ENCODE measurements at regions of chr19 and their contacts with region 1.

Region 1: DNA sequence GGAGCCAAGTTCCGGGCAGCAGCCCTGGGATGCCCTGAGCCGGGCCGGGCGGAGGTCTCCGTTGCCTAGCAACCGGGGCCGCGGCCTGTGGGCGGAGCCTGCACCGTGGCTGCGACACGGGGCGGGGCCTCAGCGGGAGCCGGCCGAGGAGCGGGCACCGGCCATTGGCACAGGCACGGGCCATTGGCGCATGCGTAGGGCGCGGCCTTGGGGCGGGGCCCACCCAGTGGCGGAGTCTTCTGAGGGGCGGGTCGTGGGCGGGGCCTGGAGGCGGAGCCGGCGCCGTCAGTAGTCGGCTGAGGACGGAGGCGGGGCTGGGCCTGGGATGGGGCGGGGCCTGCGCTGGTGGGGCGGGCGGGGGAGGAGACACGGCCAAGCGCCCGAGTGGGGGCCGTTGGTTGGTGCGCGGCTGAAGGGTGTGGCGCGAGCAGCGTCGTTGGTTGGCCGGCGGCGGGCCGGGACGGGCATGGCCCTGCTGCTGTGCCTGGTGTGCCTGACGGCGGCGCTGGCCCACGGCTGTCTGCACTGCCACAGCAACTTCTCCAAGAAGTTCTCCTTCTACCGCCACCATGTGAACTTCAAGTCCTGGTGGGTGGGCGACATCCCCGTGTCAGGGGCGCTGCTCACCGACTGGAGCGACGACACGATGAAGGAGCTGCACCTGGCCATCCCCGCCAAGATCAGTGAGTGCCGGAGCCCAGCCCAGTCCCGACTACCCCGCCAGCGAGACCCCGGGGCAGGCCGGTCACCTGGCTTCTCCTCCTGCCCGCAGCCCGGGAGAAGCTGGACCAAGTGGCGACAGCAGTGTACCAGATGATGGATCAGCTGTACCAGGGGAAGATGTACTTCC is at the start of gene IZUMO4:
- DNase-seq: peak; percentile 95
- H3K4me3 ChIP-seq: peak within 1 kb of the TSS; percentile 85 to 96 (median 86)
- H3K27ac ChIP-seq: peak within 1 kb of the TSS; percentile 82
- H3K4me1 ChIP-seq: peaks cover 37% of the 10 kb centered on the region
- H3K27me3 ChIP-seq: no peaks in the 10 kb centered on the region
- CTCF ChIP-seq: peak; percentile 13 to 55
- total RNA-seq, gene IZUMO4: 1.2 to 11.2 TPM

Region 2: GRCh38 chr19:1884719-1885334 is 211.9 kb before region 1 on chr19:
- CTCF ChIA-PET with region 1: no interaction called
- dilution Hi-C with region 1: no loop called
- in situ Hi-C with region 1: no loop called
- intact Hi-C with region 1: loop called (anchors 1 kb)
- DNase-seq: no peak
- H3K4me3 ChIP-seq: peak overlapping the region; percentile 90 to 98 (median 91)
- H3K27ac ChIP-seq: peak overlapping the region; percentile 76
- H3K4me1 ChIP-seq: peaks cover 20% of the 10 kb centered on the region
- H3K27me3 ChIP-seq: no peaks in the 10 kb centered on the region
- CTCF ChIP-seq: no peak

Region 3: GRCh38 chr19:1896508-1896907 is 200.2 kb before region 1 on chr19:
- CTCF ChIA-PET with region 1: no interaction called
- dilution Hi-C with region 1: no loop called
- in situ Hi-C with region 1: no loop called
- intact Hi-C with region 1: no loop called
- DNase-seq: no peak
- H3K4me3 ChIP-seq: no peak overlapping the region
- H3K27ac ChIP-seq: no peak overlapping the region
- H3K4me1 ChIP-seq: peaks cover 7% of the 10 kb centered on the region
- H3K27me3 ChIP-seq: no peaks in the 10 kb centered on the region
- CTCF ChIP-seq: no peak

Region 4: GRCh38 chr19:2164020-2164998 is 67.6 kb after region 1 on chr19:
- CTCF ChIA-PET with region 1: interaction called, 16 read pairs
- dilution Hi-C with region 1: no loop called
- in situ Hi-C with region 1: no loop called
- intact Hi-C with region 1: no loop called
- DNase-seq: peak; percentile 31
- H3K4me3 ChIP-seq: peak overlapping the region; percentile 82 to 95 (median 94)
- H3K27ac ChIP-seq: peak overlapping the region; percentile 62
- H3K4me1 ChIP-seq: peaks cover 25% of the 10 kb centered on the region
- H3K27me3 ChIP-seq: no peaks in the 10 kb centered on the region
- CTCF ChIP-seq: no peak

Region 5: DNA sequence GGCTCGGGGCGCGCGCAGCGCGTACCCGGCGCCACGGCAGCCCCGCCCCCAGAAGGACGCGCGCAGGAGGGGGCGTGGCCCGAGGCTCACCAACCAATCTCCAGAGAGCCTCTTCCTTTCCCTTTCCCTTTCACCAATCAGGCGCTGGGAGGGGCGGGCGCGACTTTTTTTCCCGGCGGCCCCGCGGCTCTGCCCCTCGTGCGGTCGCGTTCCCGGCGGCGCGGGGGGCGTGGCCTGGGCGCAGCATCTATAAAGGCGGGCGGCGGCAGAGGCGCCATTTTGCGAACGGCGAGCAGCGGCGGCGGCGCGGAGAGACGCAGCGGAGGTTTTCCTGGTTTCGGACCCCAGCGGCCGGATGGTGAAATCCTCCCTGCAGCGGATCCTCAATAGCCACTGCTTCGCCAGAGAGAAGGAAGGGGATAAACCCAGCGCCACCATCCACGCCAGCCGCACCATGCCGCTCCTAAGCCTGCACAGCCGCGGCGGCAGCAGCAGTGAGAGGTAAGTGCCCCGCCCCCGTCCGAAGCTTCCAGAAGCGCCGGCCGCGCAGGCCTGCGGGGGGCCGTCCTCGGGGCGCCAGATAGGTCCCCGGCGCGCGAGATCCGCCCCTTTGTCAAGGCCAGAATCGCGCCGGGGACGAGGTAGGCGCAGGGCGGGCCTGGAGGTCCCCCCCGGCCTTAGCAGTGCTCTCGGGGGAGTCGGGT is 172.7 kb after region 1 on chr19:
- CTCF ChIA-PET with region 1: interaction called, 21 read pairs
- dilution Hi-C with region 1: no loop called
- in situ Hi-C with region 1: no loop called
- intact Hi-C with region 1: no loop called
- DNase-seq: peak; percentile 94
- H3K4me3 ChIP-seq: peak overlapping the region; percentile 95 to 100 (median 99)
- H3K27ac ChIP-seq: peak overlapping the region; percentile 74
- H3K4me1 ChIP-seq: peaks cover 35% of the 10 kb centered on the region
- H3K27me3 ChIP-seq: no peaks in the 10 kb centered on the region
- CTCF ChIP-seq: no peak

Region 6: DNA sequence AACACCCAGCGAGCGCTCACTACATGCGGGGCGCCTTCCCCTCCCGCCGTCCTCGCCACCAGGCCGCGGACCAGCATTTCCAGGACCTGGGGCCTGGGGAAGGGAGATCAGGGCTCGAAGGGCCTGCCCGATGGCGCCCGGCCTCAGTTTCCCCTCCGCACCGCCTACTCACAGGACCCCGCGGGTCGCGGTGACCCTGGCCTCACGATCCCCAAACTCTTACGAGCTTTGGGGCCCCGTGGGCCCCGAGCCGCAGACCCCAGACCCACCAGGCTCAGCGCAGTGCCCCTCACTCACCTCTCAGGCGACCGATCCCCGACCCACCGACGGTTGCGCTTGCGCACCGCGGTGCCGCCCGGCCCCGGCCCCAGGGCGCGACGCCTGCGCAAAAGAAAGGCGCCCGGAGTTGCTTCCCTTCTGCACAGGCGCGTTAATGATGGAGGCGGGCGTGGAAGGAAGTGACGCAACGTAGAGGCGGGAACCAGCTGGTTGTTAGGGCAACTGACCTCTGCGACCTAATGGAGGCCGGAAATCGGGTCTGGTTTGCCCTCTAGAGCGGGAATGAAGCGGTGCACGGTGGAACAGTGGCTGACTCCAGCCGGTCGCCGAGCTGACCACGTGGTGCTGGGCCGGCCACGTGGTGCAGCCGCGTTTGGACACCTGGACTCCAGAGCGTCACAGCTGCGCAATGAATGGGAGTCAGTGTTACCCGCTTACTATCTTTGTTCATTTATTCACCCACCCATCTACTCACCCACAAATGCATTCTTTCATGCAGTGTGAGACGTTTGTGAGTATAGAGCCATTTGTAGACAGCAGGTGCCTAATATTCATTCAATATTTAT is 686.5 kb after region 1 on chr19 and contains the start of gene SGTA:
- CTCF ChIA-PET with region 1: no interaction called
- dilution Hi-C with region 1: no loop called
- in situ Hi-C with region 1: no loop called
- intact Hi-C with region 1: loop called (anchors 10 kb)
- DNase-seq: peak; percentile 99
- H3K4me3 ChIP-seq: peak within 1 kb of the TSS; percentile 89 to 98 (median 91)
- H3K27ac ChIP-seq: peak within 1 kb of the TSS; percentile 82
- H3K4me1 ChIP-seq: peaks cover 14% of the 10 kb centered on the region
- H3K27me3 ChIP-seq: no peaks in the 10 kb centered on the region
- CTCF ChIP-seq: peak; percentile 18 to 56
- total RNA-seq, gene SGTA: 52.5 to 71.3 TPM

Measured in mammary epithelial cell (primary cell).